AG04449 (cell line): ENCODE measurements at regions of chr12 and their contacts with region 1.

Region 1: DNA sequence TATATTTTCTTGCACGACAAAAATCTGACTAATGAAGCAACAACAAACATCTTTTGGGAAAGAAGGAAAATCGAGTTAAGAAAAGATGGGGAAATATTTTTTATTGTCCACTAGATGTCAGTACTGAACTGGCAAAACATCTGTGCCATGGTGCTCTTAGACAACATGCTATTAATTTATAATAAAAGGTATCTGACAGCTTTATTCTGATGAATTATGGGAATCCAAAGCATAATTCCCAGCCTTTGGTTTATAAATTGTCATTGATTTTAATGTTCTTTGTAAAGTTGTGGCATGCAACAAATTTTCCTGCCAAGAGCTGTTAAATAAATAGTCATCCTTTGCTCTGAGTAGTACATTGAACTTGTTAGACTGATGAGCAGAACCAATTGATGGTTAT is 231.2 kb downstream of the ETNK1 start:
- DNase-seq: peak; percentile 3
- H3K4me3 ChIP-seq: no peak overlapping the region
- CTCF ChIP-seq: peak; percentile 11

Region 2: GRCh38 chr12:22981711-22982110 is 125.5 kb after region 1 on chr12:
- CTCF ChIA-PET with region 1: interaction called, 36 read pairs
- POLR2A ChIA-PET with region 1: no interaction called
- DNase-seq: no peak
- H3K4me3 ChIP-seq: no peak overlapping the region
- CTCF ChIP-seq: no peak